Body of pancreas (tissue), 4 donors: ENCODE measurements at regions of chr5 and their contacts with region 1.

Region 1: DNA sequence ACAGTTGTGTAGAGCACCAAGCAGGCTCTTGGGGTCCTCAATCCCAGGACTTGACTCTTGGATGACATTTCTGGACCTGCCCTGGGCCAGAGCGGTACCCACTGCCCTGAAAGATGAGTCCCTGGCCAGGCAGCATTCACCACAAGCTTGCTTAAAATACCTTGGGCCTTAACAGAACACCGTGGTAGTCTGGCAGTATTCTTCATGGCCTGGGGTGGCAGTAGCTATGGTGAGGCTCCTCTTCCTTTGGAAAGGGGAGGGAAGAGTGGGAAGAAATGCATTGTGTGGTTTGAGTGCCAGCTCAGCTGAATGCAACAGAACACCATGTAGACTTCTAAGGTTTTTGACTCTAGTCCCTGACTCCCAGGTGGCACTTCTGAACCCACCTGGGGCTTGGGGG is 29.4 kb upstream of the IRGM start:
- DNase-seq: no peak
- ATAC-seq: no peak
- H3K4me3 ChIP-seq: no peak overlapping the region
- H3K27ac ChIP-seq: no peak overlapping the region
- H3K4me1 ChIP-seq: no peaks in the 10 kb centered on the region
- H3K27me3 ChIP-seq: no peaks in the 10 kb centered on the region
- CTCF ChIP-seq: no peak
- POLR2A ChIP-seq: no peak

Region 2: GRCh38 chr5:150350524-150351344 is 466.2 kb before region 1 on chr5:
- intact Hi-C with region 1: no loop called
- DNase-seq: peak; percentile 58 to 75 (median 72)
- ATAC-seq: peak; percentile 78
- H3K4me3 ChIP-seq: no peak overlapping the region
- H3K27ac ChIP-seq: no peak overlapping the region
- H3K4me1 ChIP-seq: peaks cover 8% of the 10 kb centered on the region
- H3K27me3 ChIP-seq: no peaks in the 10 kb centered on the region
- CTCF ChIP-seq: peak in 6 of 7 experiments; percentile 22 to 59 (median 48)
- POLR2A ChIP-seq: no peak

Region 3: GRCh38 chr5:150734579-150735384 is 82.2 kb before region 1 on chr5:
- intact Hi-C with region 1: no loop called
- DNase-seq: peak; percentile 24 to 71 (median 40)
- ATAC-seq: no peak
- H3K4me3 ChIP-seq: no peak overlapping the region
- H3K27ac ChIP-seq: peak overlapping the region in 1 of 4 donors; percentile 57
- H3K4me1 ChIP-seq: peaks cover 10% of the 10 kb centered on the region
- H3K27me3 ChIP-seq: no peaks in the 10 kb centered on the region
- CTCF ChIP-seq: no peak
- POLR2A ChIP-seq: no peak

Region 4: DNA sequence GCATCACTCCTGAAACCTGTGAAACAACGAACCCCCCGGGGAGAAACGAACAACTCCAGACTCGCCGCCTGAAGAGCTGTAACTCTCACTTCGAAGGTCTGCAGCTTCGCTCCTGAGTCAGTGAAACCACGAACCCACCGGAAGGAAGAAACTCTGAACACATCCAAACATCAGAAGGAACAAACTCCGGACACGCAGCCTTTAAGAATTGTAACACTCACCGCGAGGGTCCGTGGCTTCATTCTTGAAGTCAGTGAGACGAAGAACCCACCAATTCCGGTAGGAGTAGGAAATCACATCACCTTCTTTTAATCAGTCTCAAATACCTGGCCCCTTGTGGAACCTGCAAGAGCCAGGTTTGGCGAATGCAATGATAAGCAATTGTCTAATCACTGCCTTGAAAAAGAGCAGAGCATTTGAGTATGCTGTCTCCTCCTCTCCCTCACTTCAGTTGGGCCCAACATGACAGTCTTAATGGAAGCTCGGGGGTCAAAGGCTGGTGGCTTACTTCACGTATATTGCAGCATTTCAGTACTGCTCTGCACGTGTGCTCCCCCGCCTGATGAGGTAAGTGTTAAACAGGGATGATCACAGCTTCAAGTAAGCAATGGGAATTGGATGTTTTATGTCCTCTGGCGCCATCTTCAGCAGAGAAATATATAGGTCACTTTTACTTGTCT is 29.8 kb after region 1 on chr5:
- intact Hi-C with region 1: loop called (anchors 2 kb)
- DNase-seq: peak; percentile 43 to 76 (median 61)
- ATAC-seq: peak; percentile 92
- H3K4me3 ChIP-seq: no peak overlapping the region
- H3K27ac ChIP-seq: no peak overlapping the region
- H3K4me1 ChIP-seq: peaks cover 3% of the 10 kb centered on the region
- H3K27me3 ChIP-seq: no peaks in the 10 kb centered on the region
- CTCF ChIP-seq: peak; percentile 46 to 93 (median 79)
- POLR2A ChIP-seq: no peak

Region 5: DNA sequence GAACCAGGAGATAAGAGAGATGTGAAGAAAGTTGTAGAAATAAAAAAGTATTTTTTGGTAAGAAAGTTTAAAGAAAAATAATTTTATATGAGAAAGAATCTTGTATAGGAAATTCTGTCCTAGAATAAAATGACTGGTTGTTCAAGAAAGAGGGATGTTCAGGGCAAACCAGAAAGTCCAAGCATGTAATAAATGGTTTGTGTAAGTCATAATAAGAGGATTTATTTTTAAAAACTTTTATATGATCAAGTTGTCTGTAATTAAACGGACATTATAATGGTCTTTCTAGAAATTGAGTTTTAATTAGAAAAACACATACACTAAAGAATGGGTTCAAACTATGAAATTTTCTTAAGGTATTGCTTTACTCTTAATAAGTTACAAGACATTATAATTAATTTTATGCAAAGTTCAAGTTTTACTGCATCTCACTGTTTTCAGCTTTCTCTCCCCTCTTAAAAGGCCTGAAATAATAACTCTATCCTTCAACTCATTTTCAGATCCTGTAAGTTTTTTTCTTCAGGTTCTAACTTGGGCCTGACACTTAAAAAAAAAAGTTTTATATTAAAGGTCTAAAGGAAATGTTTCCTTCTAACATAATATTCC is 143.9 kb after region 1 on chr5:
- intact Hi-C with region 1: no loop called
- DNase-seq: no peak
- ATAC-seq: no peak
- H3K4me3 ChIP-seq: no peak overlapping the region
- H3K27ac ChIP-seq: no peak overlapping the region
- H3K4me1 ChIP-seq: no peaks in the 10 kb centered on the region
- H3K27me3 ChIP-seq: no peaks in the 10 kb centered on the region
- CTCF ChIP-seq: no peak
- POLR2A ChIP-seq: no peak